Activated CD4-positive, alpha-beta T cell treated with anti-CD3 and anti-CD28 coated beads, Interleukin-2, amount 10 ng/mL, durations not matched to agents 24 days and 14 days (primary cell): ENCODE measurements at regions of chr12 and their contacts with region 1.

Region 1: GRCh38 chr12:4276524-4277204 is 3.1 kb downstream of the CCND2 start:
- DNase-seq: peak; percentile 95
- H3K4me3 Mint-ChIP-seq: peak overlapping the region; percentile 97
- H3K27ac Mint-ChIP-seq: peak overlapping the region; percentile 88
- H3K4me1 Mint-ChIP-seq: peaks cover 56% of the 10 kb centered on the region
- H3K27me3 Mint-ChIP-seq: no peaks in the 10 kb centered on the region

Region 2: DNA sequence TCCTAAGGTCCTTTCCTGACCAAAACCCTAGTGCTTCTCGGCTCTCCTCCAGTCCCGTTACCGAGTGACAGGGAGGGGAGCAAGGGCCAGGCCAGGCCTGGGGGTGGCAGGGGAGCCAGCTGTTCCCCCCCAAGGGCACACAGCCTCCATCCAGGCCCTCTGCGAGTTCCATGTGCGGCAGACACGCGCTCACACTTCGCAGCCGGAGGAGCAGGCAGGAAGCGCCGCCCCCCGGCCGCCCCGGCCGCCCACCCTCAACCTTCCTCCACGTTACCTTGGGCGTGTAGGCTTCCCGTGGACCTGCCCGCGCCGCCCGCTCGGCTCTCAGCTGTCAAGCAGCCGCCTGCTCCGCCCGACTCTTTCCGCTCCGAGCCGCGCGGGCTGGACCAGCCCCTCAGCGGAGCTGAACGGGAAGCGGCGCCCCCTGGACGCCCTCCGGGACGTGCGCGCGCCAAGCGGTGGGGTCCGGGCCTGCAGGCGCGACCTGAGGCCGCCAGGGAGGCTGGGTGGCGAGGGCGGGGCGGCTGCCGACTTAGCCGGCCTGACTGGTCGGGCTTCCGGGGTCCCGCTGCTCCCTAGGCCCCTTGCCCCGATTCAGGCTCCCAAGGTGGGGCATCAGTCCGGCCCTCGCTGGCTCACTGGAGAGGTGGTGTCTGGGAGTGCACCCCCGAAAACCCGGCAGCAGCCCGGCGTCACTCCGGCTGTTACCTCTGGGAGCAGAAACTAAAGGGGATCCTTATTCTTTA is 523.8 kb before region 1 on chr12 and contains the start of gene CRACR2A:
- intact Hi-C with region 1: loop called (anchors 2 kb)
- DNase-seq: peak; percentile 96
- H3K4me3 Mint-ChIP-seq: peak within 1 kb of the TSS; percentile 90
- H3K27ac Mint-ChIP-seq: peak within 1 kb of the TSS; percentile 98
- H3K4me1 Mint-ChIP-seq: peaks cover 47% of the 10 kb centered on the region
- H3K27me3 Mint-ChIP-seq: no peaks in the 10 kb centered on the region
- total RNA-seq, gene CRACR2A: 26.6 and 27.0 TPM in 2 replicates

Region 3: DNA sequence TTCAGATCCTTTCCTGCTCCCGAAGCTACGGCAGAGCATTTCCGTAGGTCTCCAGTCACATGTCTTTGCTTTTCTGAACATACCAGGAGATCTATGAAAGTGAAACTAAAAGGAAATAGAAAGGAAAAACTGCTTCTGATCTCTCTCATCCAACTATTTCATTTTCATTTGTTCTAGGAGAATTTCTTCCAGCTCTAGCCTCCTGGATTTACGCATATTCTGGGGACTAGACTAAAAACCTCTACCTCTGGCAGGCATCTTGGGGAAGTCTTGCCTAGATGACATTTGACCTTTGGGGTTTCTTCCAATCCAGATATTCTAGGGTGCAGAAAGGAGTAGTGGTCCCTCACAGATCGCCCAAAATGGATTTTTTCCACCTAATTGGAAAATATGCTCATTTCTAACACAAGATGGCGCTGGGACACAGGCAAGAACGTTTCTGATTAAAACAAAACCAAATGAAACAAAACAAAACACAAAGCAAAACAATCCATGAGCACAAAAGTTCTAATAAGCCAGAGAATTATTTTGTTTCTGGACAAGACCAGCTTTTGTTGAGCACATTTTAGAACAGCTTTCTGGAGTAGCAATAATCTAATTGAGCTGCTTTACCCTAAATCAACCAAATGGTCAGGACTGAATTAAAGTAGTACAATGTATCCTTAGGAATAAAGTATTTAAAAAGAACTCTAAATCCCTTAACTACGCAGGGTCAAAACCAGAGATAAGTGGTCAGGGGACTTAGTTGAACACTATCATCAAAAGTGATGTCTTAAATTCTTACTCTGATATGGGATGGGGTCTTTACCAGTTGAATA is 391.2 kb before region 1 on chr12:
- intact Hi-C with region 1: loop called (anchors 1 kb)
- DNase-seq: peak; percentile 86
- H3K4me3 Mint-ChIP-seq: peak overlapping the region; percentile 34
- H3K27ac Mint-ChIP-seq: no peak overlapping the region
- H3K4me1 Mint-ChIP-seq: peaks cover 12% of the 10 kb centered on the region
- H3K27me3 Mint-ChIP-seq: peaks cover 11% of the 10 kb centered on the region

Region 4: DNA sequence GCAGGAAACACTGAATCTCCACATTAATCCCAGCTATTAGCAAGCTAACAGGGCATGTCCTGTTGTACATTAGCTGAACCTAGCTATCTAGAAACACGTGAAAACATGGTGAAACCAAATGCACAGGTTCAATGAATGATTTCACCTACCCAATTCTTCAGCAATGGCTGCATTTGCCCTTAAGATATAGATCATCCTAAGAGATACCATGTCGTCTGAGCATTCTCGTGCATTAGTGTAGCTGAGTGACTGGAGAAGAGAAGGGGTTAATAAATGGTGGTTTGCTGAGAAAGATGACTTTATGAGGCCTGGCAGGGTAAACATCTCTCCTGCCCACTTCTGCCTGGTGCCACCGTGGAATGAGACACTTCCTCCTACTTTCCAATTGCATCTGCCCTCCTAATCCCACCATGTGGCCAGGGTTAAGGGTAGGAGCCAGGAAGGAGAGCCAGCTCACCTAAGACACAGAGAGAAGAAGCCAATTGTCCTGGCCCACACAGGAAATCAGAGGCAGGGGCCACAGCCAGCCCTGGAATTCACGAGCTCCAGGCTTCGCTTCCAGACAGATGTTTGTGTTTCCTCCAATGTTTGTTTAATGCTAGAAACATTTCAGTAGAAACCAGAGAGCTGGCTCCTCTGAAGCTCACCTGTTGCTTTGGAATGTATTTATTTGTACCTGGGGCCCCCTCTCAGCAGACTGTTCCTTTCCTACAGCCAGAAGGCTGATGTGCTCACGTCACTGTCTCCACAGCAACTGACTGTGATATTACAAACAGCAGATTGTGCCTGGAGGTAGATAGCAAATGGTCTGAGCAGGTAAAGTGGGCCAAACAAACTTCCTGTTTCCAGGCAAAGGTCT is 277.5 kb before region 1 on chr12:
- intact Hi-C with region 1: loop called (anchors 1 kb)
- DNase-seq: no peak
- H3K4me3 Mint-ChIP-seq: no peak overlapping the region
- H3K27ac Mint-ChIP-seq: no peak overlapping the region
- H3K4me1 Mint-ChIP-seq: peaks cover 5% of the 10 kb centered on the region
- H3K27me3 Mint-ChIP-seq: peaks cover 3% of the 10 kb centered on the region

Region 5: GRCh38 chr12:4112734-4113325 is 163.8 kb before region 1 on chr12:
- intact Hi-C with region 1: loop called (anchors 1 kb)
- DNase-seq: peak; percentile 48
- H3K4me3 Mint-ChIP-seq: no peak overlapping the region
- H3K27ac Mint-ChIP-seq: peak overlapping the region; percentile 9
- H3K4me1 Mint-ChIP-seq: peaks cover 57% of the 10 kb centered on the region
- H3K27me3 Mint-ChIP-seq: no peaks in the 10 kb centered on the region

Region 6: GRCh38 chr12:4135919-4136605 is 140.6 kb before region 1 on chr12:
- intact Hi-C with region 1: loop called (anchors 1 kb)
- DNase-seq: peak; percentile 75
- H3K4me3 Mint-ChIP-seq: peak overlapping the region; percentile 5
- H3K27ac Mint-ChIP-seq: peak overlapping the region; percentile 91
- H3K4me1 Mint-ChIP-seq: peaks cover 46% of the 10 kb centered on the region
- H3K27me3 Mint-ChIP-seq: no peaks in the 10 kb centered on the region

Region 7: GRCh38 chr12:4148418-4149056 is 128.1 kb before region 1 on chr12:
- intact Hi-C with region 1: no loop called
- DNase-seq: no peak
- H3K4me3 Mint-ChIP-seq: no peak overlapping the region
- H3K27ac Mint-ChIP-seq: peak overlapping the region; percentile 80
- H3K4me1 Mint-ChIP-seq: peaks cover 89% of the 10 kb centered on the region
- H3K27me3 Mint-ChIP-seq: no peaks in the 10 kb centered on the region